CD4-positive, alpha-beta T cell (primary cell): ENCODE measurements at regions of chr21 and their contacts with region 1.

Region 1: GRCh38 chr21:28745131-28746016 is 247.3 kb downstream of the LTN1 start:
- DNase-seq: peak; percentile 43 to 86 (median 58)
- ATAC-seq: peak; percentile 82
- H3K4me3 ChIP-seq: peak overlapping the region; percentile 43
- H3K4me3 Mint-ChIP-seq: no peak overlapping the region
- H3K27ac ChIP-seq: no peak overlapping the region
- H3K27ac Mint-ChIP-seq: no peak overlapping the region
- H3K4me1 ChIP-seq: peaks cover 4% of the 10 kb centered on the region
- H3K4me1 Mint-ChIP-seq: no peaks in the 10 kb centered on the region
- H3K27me3 ChIP-seq: no peaks in the 10 kb centered on the region
- H3K27me3 Mint-ChIP-seq: no peaks in the 10 kb centered on the region
- CTCF ChIP-seq: peak; percentile 74

Region 2: GRCh38 chr21:26845066-26845758 is 1900.2 kb before region 1 on chr21 and contains the start of gene ADAMTS1:
- CTCF ChIA-PET with region 1: interaction called, 7 read pairs
- POLR2A ChIA-PET with region 1: no interaction called
- intact Hi-C with region 1: loop called in 1 of 2 experiments (anchors 1 kb)
- DNase-seq: peak in 3 of 14 experiments; percentile 16 to 21 (median 21)
- ATAC-seq: no peak
- H3K4me3 ChIP-seq: peak within 1 kb of the TSS; percentile 37
- H3K4me3 Mint-ChIP-seq: peak within 1 kb of the TSS; percentile 84
- H3K27ac ChIP-seq: no peak within 1 kb of the TSS
- H3K27ac Mint-ChIP-seq: no peak within 1 kb of the TSS
- H3K4me1 ChIP-seq: peaks cover 40% of the 10 kb centered on the region
- H3K4me1 Mint-ChIP-seq: peaks cover 35% of the 10 kb centered on the region
- H3K27me3 ChIP-seq: peaks cover 41 to 60% of the 10 kb centered on the region in 2 experiments
- H3K27me3 Mint-ChIP-seq: peaks cover 81% of the 10 kb centered on the region
- CTCF ChIP-seq: no peak
- total RNA-seq, gene ADAMTS1: 0.08 to 0.25 TPM

Region 3: DNA sequence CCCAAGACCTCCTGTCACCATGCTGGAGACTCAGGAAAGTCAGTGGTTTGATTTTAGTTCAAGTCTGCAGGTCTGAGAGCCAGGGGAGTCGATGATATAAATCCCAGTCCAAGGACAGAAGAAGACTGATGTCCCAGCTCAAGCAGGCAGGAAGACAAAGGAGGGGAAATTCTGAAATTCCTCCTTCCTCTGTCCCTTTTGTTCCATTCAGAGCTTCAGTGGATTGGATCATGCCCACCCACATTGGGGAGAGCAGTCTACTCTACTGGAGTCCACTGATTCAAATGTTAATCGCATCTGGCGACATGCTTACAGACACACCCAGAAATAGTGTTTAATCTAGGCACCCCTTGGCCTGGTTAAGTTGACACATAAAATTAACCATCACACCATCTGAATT is 1893.0 kb before region 1 on chr21:
- CTCF ChIA-PET with region 1: interaction called, 7 read pairs
- POLR2A ChIA-PET with region 1: no interaction called
- intact Hi-C with region 1: loop called (anchors 1 to 2 kb)
- DNase-seq: no peak
- ATAC-seq: no peak
- H3K4me3 ChIP-seq: no peak overlapping the region
- H3K4me3 Mint-ChIP-seq: no peak overlapping the region
- H3K27ac ChIP-seq: no peak overlapping the region
- H3K27ac Mint-ChIP-seq: no peak overlapping the region
- H3K4me1 ChIP-seq: no peaks in the 10 kb centered on the region
- H3K4me1 Mint-ChIP-seq: peaks cover under 1% of the 10 kb centered on the region
- H3K27me3 ChIP-seq: peaks cover 0 to 19% of the 10 kb centered on the region in 2 experiments
- H3K27me3 Mint-ChIP-seq: peaks cover 40% of the 10 kb centered on the region
- CTCF ChIP-seq: no peak

Region 4: GRCh38 chr21:27700974-27701614 is 1044.3 kb before region 1 on chr21:
- CTCF ChIA-PET with region 1: no interaction called
- POLR2A ChIA-PET with region 1: no interaction called
- intact Hi-C with region 1: loop called in 1 of 2 experiments (anchors 1 kb)
- DNase-seq: peak; percentile 1 to 63 (median 26)
- ATAC-seq: peak; percentile 57
- H3K4me3 ChIP-seq: no peak overlapping the region
- H3K4me3 Mint-ChIP-seq: no peak overlapping the region
- H3K27ac ChIP-seq: no peak overlapping the region
- H3K27ac Mint-ChIP-seq: no peak overlapping the region
- H3K4me1 ChIP-seq: no peaks in the 10 kb centered on the region
- H3K4me1 Mint-ChIP-seq: no peaks in the 10 kb centered on the region
- H3K27me3 ChIP-seq: no peaks in the 10 kb centered on the region
- H3K27me3 Mint-ChIP-seq: no peaks in the 10 kb centered on the region
- CTCF ChIP-seq: peak; percentile 37

Region 5: DNA sequence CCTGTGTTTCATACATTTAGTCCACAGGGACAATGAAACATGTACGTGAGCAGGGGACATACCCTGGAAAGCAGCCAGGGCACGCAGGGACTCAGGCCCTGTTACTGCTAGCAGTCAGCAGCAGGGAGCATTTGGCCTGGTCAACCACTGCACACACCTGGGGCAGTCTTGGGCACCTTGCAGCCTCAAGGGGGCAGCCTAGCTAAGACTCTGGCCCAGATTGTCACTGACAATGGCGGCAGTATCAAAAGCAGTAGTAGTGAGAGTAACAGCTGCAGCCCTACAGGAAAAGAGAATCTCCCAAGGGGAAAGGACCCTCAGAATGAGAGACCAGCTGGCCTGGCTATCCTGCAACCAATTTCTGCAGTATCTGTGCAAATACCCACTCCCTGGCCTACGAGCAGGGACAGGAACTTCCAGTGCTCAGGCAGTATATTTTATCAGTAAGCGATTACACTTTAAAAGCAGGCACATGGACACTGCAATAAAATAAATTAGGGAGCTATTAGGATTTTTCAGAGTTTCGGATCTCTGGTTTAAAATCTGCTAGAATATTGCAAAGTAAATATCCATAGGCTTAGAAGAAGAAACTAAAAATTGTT is 228.3 kb before region 1 on chr21:
- CTCF ChIA-PET with region 1: interaction called, 38 read pairs
- POLR2A ChIA-PET with region 1: interaction called, 10 read pairs
- intact Hi-C with region 1: loop called (anchors 1 kb)
- DNase-seq: peak; percentile 33 to 77 (median 50)
- ATAC-seq: peak; percentile 87
- H3K4me3 ChIP-seq: no peak overlapping the region
- H3K4me3 Mint-ChIP-seq: no peak overlapping the region
- H3K27ac ChIP-seq: no peak overlapping the region
- H3K27ac Mint-ChIP-seq: no peak overlapping the region
- H3K4me1 ChIP-seq: no peaks in the 10 kb centered on the region
- H3K4me1 Mint-ChIP-seq: no peaks in the 10 kb centered on the region
- H3K27me3 ChIP-seq: no peaks in the 10 kb centered on the region
- H3K27me3 Mint-ChIP-seq: no peaks in the 10 kb centered on the region
- CTCF ChIP-seq: peak; percentile 66

Region 6: GRCh38 chr21:28675331-28676041 is 69.9 kb before region 1 on chr21:
- CTCF ChIA-PET with region 1: no interaction called
- POLR2A ChIA-PET with region 1: no interaction called
- intact Hi-C with region 1: no loop called
- DNase-seq: no peak
- ATAC-seq: no peak
- H3K4me3 ChIP-seq: no peak overlapping the region
- H3K4me3 Mint-ChIP-seq: no peak overlapping the region
- H3K27ac ChIP-seq: no peak overlapping the region
- H3K27ac Mint-ChIP-seq: no peak overlapping the region
- H3K4me1 ChIP-seq: no peaks in the 10 kb centered on the region
- H3K4me1 Mint-ChIP-seq: no peaks in the 10 kb centered on the region
- H3K27me3 ChIP-seq: no peaks in the 10 kb centered on the region
- H3K27me3 Mint-ChIP-seq: no peaks in the 10 kb centered on the region
- CTCF ChIP-seq: no peak

Region 7: GRCh38 chr21:28943631-28944030 is 198.3 kb after region 1 on chr21:
- CTCF ChIA-PET with region 1: interaction called, 3 read pairs
- POLR2A ChIA-PET with region 1: no interaction called
- intact Hi-C with region 1: loop called (anchors 1 to 5 kb)
- DNase-seq: no peak
- ATAC-seq: no peak
- H3K4me3 ChIP-seq: no peak overlapping the region
- H3K4me3 Mint-ChIP-seq: no peak overlapping the region
- H3K27ac ChIP-seq: no peak overlapping the region
- H3K27ac Mint-ChIP-seq: no peak overlapping the region
- H3K4me1 ChIP-seq: no peaks in the 10 kb centered on the region
- H3K4me1 Mint-ChIP-seq: no peaks in the 10 kb centered on the region
- H3K27me3 ChIP-seq: no peaks in the 10 kb centered on the region
- H3K27me3 Mint-ChIP-seq: no peaks in the 10 kb centered on the region
- CTCF ChIP-seq: no peak